ENCODE measurements at regions of chr1 and their contacts with region 1.

Region 1: GRCh38 chr1:155352631-155353030 is 31.9 kb downstream of the RUSC1 start:
- DNase-seq: no peak
- H3K4me3 ChIP-seq: no peak overlapping the region
- H3K27ac ChIP-seq: no peak overlapping the region
- H3K4me1 ChIP-seq: no peaks in the 10 kb centered on the region
- CTCF ChIP-seq: no peak

Region 2: DNA sequence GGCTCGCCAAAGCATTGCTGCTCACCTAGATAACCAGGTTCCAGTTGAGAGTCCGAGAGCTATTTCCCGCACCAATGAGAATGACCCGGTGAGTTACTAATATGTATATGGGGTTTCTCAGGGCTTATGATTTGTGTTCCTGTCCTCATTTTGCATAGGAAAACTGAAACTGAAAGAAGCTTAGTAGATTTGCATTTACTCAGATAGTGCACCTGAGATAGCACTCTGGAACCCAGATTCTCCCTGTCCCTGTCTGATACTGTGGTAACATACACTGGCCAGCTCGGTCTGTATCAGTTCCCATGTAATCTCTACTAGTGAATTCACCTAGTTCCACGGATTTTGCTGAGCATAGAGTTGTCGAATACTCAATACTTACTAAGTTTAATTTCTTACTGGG is 364.4 kb after region 1 on chr1:
- CTCF ChIA-PET with region 1: no interaction called
- POLR2A ChIA-PET with region 1: interaction called, 10 read pairs
- intact Hi-C with region 1: no loop called
- DNase-seq: peak; percentile 16
- H3K4me3 ChIP-seq: no peak overlapping the region
- H3K27ac ChIP-seq: no peak overlapping the region
- H3K4me1 ChIP-seq: peaks cover 9% of the 10 kb centered on the region
- CTCF ChIP-seq: no peak

Measured in OCI-LY7 (cell line).